Activated CD4-positive, alpha-beta T cell treated with anti-CD3 and anti-CD28 coated beads, Interleukin-2, amount 10 ng/mL, durations not matched to agents 24 days and 14 days (primary cell): ENCODE measurements at regions of chr19 and their contacts with region 1.

Region 1: DNA sequence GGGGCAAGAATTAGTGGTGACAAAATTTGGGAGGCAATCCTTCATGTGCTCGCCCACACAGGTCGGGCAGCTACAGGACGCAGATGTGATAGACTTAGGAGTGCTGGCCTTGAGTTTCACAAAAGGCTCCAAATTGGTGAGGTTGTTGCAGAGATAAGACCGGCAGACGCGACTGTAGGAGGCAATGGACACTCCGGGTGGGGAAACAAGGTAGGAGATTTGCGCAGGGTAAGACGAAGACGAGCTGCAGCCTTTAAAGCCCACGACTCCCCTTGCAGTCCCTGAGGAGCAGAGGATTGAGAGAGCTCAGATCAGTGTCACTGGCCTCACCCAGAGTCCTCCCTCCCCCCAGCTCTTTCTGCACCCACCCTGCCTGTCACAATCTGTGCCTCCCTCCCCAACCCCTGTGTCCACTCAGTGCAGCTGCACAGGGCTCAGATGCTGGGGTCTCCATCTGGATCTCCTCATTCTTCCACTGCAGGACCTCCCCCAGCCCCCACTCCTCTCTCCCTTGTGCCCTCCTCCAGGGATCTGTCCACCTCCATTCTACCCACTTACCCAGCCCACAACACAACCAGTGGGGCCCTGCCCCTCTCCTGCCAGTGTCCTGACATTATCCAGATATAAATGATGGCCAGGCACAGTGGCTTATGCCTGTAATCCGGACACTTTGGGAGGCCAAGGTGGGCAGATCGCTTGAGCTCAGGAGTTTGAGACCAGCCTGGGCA is 6.3 kb downstream of the LYPD4 start:
- DNase-seq: no peak
- H3K4me3 Mint-ChIP-seq: no peak overlapping the region
- H3K27ac Mint-ChIP-seq: no peak overlapping the region
- H3K4me1 Mint-ChIP-seq: no peaks in the 10 kb centered on the region
- H3K27me3 Mint-ChIP-seq: peaks cover 33% of the 10 kb centered on the region

Region 2: DNA sequence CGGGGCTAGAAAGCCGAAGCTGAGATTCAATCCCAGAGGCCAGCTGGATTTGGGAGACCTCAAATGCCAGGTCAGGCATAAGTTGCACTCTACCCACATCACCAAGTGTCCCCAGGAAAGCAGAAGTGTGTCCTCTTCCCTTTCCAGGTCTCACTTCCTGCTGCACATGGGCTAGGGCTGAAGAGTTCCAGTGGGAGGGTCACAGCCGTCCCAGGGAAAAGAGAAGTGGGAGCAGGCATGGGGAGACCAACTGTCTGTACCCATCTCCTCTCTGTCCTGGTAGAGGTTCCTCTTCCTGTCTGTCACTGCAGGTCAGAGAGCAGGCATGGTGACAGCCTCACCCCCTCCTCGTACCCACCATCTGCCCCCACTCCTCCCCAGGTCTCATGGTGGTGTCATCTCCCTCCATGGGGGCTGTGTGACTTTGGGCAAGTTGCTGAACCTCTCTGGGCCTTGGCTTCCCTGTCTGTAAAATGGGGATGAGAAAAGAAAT is 604.4 kb before region 1 on chr19:
- intact Hi-C with region 1: no loop called
- DNase-seq: no peak
- H3K4me3 Mint-ChIP-seq: no peak overlapping the region
- H3K27ac Mint-ChIP-seq: no peak overlapping the region
- H3K4me1 Mint-ChIP-seq: no peaks in the 10 kb centered on the region
- H3K27me3 Mint-ChIP-seq: no peaks in the 10 kb centered on the region

Region 3: DNA sequence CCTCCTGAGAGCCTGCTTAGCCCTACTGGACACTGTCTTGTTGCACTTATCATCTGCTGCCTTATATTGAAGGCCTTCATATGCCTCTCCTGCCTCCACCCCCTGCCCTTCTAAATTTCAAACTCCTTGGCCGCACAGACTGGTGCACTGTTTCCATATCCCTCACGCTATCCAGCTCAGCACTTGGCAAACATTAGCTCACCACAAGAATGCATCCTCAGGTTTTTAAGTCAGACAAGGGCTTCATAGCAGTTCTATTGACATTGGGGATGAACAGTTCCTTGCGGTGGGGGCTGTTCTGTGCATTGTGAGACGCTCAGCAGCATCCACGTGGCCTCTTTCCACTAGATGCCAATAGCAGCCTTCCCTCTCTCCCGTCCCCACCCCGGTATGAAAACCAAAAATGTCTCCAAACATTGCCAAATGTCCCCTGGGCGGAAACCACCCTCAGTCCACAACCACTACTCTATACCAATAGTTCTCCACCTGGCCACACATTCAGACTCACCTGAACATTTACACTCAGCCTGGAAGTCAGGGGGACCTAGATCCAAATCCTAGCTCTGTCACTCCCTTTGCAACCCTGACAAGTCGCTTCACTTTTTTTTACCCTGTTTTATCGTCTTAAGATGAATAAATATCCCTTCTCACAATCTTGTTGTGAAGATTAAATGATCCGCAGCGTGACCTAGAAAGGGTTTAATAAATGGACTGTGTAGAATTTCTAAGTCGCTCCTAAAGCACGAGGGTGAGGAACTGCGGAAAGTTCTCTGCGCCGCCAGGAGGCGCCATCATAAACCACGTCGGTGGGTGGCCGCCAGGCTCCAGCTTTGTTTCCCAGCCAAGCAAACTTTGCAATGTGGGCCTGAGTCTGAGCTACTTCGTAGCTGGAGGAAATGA is 45.4 kb before region 1 on chr19:
- intact Hi-C with region 1: loop called (anchors 5 kb)
- DNase-seq: peak; percentile 89
- H3K4me3 Mint-ChIP-seq: no peak overlapping the region
- H3K27ac Mint-ChIP-seq: no peak overlapping the region
- H3K4me1 Mint-ChIP-seq: peaks cover 7% of the 10 kb centered on the region
- H3K27me3 Mint-ChIP-seq: peaks cover 52% of the 10 kb centered on the region

Region 4: GRCh38 chr19:41872775-41873647 is 34.9 kb after region 1 on chr19:
- intact Hi-C with region 1: no loop called
- DNase-seq: peak; percentile 90
- H3K4me3 Mint-ChIP-seq: peak overlapping the region; percentile 59
- H3K27ac Mint-ChIP-seq: peak overlapping the region; percentile 83
- H3K4me1 Mint-ChIP-seq: peaks cover 74% of the 10 kb centered on the region
- H3K27me3 Mint-ChIP-seq: no peaks in the 10 kb centered on the region

Region 5: DNA sequence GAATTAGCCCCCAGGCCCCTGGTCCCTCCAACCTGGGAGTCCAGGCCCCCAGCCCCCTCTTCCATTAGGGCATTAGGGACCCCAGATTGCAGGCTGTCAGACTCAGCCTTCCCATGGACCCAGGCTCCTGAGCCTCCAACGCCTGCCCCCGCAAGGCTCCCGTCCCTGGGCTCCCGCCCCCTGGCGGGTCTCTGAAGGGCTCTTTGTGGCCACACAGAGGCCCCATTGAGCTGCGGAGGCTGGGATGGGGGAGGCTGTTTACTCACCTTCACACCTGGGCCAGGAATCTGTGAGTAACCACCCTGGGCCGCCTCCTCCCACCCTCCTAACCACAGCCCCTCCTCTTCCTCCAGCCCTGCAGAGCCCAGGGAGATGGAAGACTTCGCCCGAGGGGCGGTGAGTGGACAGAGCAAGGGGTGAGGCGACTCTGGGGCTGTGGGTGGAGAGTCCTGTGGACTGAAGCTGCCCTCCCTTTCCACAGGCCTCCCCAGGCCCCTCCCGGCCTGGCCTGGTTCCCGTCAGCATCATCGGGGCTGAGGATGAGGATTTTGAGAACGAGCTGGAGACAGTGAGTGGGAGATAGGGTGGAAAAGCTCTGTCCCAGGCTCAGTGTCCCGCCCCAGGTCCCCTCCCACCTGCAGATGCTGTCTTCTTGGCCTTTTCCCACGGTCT is 49.7 kb after region 1 on chr19:
- intact Hi-C with region 1: no loop called
- DNase-seq: peak; percentile 92
- H3K4me3 Mint-ChIP-seq: peak overlapping the region; percentile 83
- H3K27ac Mint-ChIP-seq: peak overlapping the region; percentile 90
- H3K4me1 Mint-ChIP-seq: peaks cover 48% of the 10 kb centered on the region
- H3K27me3 Mint-ChIP-seq: no peaks in the 10 kb centered on the region